ENCODE measurements at regions of chr16 and their contacts with region 1.

Region 1: GRCh38 chr16:75110637-75111513 is 5.7 kb downstream of the LDHD start:
- DNase-seq: peak; percentile 86 to 96 (median 92)

Region 2: GRCh38 chr16:74998481-74999218 is 112.2 kb before region 1 on chr16 and contains the start of gene ZNRF1:
- intact Hi-C with region 1: loop called (anchors 2 kb)
- DNase-seq: peak; percentile 52 to 90 (median 80)

Region 3: GRCh38 chr16:75148311-75149195 is 37.7 kb after region 1 on chr16 and contains the start of gene ZFP1:
- intact Hi-C with region 1: loop called (anchors 5 kb)
- DNase-seq: peak; percentile 91 to 99 (median 96)

Region 4: DNA sequence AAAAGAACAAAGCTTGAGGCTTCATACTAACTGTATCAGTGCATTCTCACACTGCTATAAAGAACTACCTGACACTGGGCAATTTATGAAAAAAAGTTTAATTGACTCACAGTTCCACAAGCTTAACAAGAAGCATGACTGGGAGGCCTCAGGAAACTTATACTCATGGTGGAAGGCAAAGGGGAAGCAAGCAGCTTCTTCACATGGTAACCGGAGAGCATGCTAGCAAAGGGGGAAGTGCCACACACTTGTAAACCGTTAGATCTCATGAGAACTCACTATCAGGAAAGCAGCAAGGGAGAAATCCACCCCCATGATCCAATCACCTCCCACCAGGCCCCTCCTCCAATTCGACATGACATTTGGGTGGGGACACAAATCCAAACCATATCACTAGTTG is 70.8 kb after region 1 on chr16:
- intact Hi-C with region 1: no loop called
- DNase-seq: no peak

Measured in head of caudate nucleus (tissue), 42 donors.